ENCODE measurements at regions of chr20 and their contacts with region 1.

Region 1: GRCh38 chr20:38304845-38305447 is 990 bp downstream of the BPI start:
- DNase-seq: peak; percentile 47
- CTCF ChIP-seq: peak; percentile 33

Region 2: GRCh38 chr20:38293491-38294065 is 11.4 kb before region 1 on chr20:
- CTCF ChIA-PET with region 1: interaction called, 10 read pairs
- POLR2A ChIA-PET with region 1: no interaction called
- DNase-seq: no peak
- CTCF ChIP-seq: no peak

Region 3: GRCh38 chr20:38434301-38434741 is 129.4 kb after region 1 on chr20:
- CTCF ChIA-PET with region 1: no interaction called
- POLR2A ChIA-PET with region 1: no interaction called
- DNase-seq: no peak
- CTCF ChIP-seq: no peak

Region 4: GRCh38 chr20:38581013-38581412 is 276.1 kb after region 1 on chr20 and contains the start of gene ADIG:
- CTCF ChIA-PET with region 1: no interaction called
- POLR2A ChIA-PET with region 1: no interaction called
- DNase-seq: no peak
- CTCF ChIP-seq: no peak